Calu3 (cell line): ENCODE measurements at regions of chr11 and their contacts with region 1.

Region 1: DNA sequence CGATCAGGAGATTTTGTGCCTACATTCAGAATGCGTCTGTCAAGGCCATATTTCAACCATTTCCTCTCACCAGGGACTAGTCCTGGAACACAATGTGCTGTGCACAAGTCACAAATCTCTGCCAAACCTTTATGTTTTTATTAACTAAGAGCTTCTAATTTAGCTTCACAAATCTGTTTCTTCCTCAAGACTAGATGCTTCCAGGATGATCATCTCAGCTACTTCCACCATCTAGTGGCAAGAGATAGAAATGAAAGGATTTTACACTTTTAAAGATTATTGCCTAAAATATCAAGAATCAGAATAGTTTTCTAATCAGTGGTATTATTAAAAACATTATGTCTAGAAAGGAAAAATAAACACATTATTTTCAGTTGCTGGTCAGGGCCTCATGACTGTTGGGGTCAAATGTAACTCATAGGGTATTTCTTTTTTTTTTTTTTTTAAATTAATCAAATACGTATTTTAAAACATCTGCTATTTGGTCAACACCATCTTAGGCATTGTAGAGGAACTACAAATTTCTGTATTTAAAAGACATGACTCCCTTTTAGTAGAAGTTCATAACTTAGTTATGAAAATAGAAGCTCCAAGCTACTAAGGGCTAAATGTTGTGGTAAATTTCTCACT is 1102.6 kb downstream of the DLG2 start:
- DNase-seq: no peak
- H3K4me3 Mint-ChIP-seq: no peak overlapping the region
- H3K27ac Mint-ChIP-seq: no peak overlapping the region
- H3K4me1 Mint-ChIP-seq: no peaks in the 10 kb centered on the region
- H3K27me3 Mint-ChIP-seq: peaks cover 7% of the 10 kb centered on the region
- CTCF ChIP-seq: peak; percentile 24

Region 2: DNA sequence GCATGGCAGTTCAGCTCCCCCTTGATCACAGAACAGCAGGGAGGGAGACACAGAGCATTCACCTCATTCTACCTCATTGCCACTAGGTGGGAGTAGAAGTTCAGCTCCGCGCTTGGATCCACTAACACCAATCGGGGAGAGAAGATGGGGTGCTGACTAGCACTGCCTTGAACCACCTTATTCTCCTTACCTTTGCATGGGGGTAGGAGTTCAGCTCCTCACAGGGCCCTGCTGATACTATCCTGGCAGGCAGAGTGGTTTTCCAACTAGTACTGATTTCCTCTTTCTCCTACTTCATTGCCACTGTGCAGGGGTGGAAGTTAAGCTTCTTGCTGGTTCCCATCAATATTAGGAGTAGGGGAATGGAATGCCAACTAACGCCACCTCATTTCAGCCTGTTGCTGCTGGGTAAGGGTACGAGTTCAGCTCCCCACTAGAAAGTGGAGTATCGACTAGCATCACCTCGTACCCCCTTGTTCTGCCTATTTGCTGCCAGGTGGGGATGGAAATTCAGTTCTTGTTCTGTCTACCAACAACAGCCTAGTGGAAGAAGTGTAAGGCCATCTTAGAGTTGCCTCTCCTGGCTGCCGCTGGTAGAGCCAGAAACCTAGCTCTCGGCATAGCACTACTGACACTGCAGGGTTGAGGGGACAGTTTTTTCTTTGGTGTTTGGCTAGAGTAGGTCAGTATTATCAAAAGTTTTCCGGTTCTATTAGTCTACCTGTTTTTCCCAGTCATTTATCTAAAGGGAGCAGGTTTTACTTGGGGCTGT is 687.5 kb before region 1 on chr11:
- CTCF ChIA-PET with region 1: interaction called, 3 read pairs
- intact Hi-C with region 1: loop called (anchors 5 kb)
- DNase-seq: peak; percentile 19
- H3K4me3 Mint-ChIP-seq: no peak overlapping the region
- H3K27ac Mint-ChIP-seq: no peak overlapping the region
- H3K4me1 Mint-ChIP-seq: peaks cover 11% of the 10 kb centered on the region
- H3K27me3 Mint-ChIP-seq: peaks cover 19% of the 10 kb centered on the region
- CTCF ChIP-seq: peak; percentile 61

Region 3: GRCh38 chr11:84390441-84391078 is 134.0 kb before region 1 on chr11:
- CTCF ChIA-PET with region 1: interaction called, 3 read pairs
- intact Hi-C with region 1: loop called (anchors 2 kb)
- DNase-seq: peak; percentile 23
- H3K4me3 Mint-ChIP-seq: no peak overlapping the region
- H3K27ac Mint-ChIP-seq: no peak overlapping the region
- H3K4me1 Mint-ChIP-seq: peaks cover 8% of the 10 kb centered on the region
- H3K27me3 Mint-ChIP-seq: no peaks in the 10 kb centered on the region
- CTCF ChIP-seq: no peak

Region 4: DNA sequence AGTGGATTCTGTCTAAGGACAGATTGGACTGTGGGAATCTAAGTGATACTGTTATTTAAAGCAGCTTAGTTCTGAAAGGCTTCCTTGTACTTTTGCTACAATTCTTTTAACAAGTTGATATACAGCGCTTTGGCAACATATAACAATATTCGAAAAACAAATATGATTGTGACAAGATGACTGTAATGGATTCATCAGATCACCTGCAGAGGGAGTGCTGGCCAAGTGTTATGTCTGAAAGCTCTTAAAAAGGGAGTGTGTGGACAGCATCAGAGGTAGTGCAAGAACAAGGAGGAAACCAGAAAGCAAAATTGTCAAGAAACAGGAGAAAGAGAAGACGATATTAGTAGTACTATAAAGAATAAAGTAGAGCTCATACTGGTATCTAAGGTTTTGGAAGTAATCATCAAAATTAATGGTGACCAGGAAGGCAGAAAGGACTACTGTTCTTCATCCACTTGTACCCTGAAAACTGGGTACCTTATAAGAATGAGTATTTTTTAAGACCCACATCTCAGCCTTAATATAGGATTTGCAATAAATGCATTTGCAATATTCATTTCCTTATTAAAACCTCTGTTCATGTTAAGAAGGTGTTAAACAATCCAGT is 126.4 kb before region 1 on chr11:
- CTCF ChIA-PET with region 1: interaction called, 7 read pairs
- intact Hi-C with region 1: loop called (anchors 2 kb)
- DNase-seq: peak; percentile 7
- H3K4me3 Mint-ChIP-seq: no peak overlapping the region
- H3K27ac Mint-ChIP-seq: no peak overlapping the region
- H3K4me1 Mint-ChIP-seq: no peaks in the 10 kb centered on the region
- H3K27me3 Mint-ChIP-seq: peaks cover 2% of the 10 kb centered on the region
- CTCF ChIP-seq: no peak

Region 5: GRCh38 chr11:84558085-84558905 is 33.8 kb after region 1 on chr11:
- CTCF ChIA-PET with region 1: no interaction called
- intact Hi-C with region 1: no loop called
- DNase-seq: peak; percentile 20
- H3K4me3 Mint-ChIP-seq: no peak overlapping the region
- H3K27ac Mint-ChIP-seq: no peak overlapping the region
- H3K4me1 Mint-ChIP-seq: peaks cover 19% of the 10 kb centered on the region
- H3K27me3 Mint-ChIP-seq: peaks cover 4% of the 10 kb centered on the region
- CTCF ChIP-seq: no peak